Activated CD8-positive, alpha-beta memory T cell treated with anti-CD3 and anti-CD28 coated beads, Interleukin-2, amount 10 ng/mL, durations not matched to agents 7 days and 5 days (primary cell): ENCODE measurements at regions of chr6 and their contacts with region 1.

Region 1: DNA sequence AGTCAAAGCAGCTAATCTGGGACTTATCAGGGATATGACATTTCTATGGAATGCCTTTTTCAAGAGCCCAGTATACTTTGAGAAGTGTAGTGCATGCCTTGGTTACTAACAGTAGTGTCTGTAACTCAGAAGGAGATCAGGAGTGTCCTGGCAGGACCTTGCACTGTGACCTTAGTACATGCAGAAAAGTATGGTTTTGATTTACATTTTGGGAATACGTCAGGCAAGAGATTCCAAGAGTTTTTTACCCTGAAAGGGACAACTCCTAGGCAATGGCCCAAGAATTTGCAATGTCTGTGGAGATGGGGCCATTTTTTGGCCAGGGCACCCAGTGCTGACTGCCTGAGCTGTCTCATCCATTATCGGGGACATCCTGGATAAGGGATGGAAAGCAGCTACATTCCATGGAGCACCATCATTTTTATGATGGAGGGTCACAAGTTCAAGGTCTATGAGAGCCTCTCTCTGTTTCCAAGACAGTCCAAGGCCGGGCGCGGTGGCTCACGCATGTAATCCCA is 80.2 kb downstream of the FAM50B start:
- DNase-seq: no peak
- ATAC-seq: no peak
- H3K4me3 Mint-ChIP-seq: no peak overlapping the region
- H3K27ac Mint-ChIP-seq: no peak overlapping the region
- H3K4me1 Mint-ChIP-seq: no peaks in the 10 kb centered on the region
- H3K27me3 Mint-ChIP-seq: peaks cover 3% of the 10 kb centered on the region

Region 2: DNA sequence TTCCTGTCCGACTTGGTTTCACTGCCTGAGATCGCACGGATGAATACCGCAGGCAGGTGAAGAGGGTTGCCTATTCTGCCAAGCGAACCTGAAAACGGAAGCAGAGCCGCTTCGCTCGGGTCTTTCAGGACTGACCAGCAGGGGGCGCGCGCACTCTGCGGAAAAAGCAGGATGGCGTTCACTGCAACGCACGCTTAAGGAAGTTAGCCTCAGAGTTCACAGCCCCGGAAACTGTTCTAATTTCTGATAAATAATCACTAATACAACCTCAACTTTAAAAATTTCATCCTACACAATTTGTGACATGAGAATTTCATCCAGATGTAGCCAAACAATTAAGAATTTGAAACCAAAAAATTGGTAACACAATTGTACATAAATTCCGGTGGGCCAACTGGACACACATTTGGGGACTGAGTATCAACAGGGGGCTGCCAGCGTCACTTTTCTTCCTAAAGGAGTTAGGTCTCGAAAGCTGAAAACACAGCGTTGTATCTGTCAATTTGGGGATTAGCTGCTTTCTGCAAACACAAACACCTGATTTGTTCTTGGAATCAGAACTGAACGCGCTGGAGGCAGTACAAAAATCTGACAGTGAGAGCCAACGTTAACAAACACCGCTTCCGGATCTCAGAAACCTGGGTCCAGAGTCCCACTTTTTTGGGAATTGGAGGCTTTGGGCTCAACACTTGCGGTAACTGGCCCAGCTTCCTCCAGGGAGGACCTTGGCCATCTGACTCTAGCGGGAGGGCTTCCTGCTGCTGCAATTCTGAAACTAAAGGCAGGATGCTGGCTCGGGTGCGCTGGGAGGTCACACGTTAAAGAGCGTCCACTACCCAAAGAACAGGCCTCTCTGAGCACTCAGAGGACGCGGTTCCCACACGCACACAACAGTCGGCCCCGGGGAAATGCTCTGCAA is 186.7 kb before region 1 on chr6:
- CTCF ChIA-PET with region 1: interaction called, 14 read pairs
- DNase-seq: peak; percentile 88
- ATAC-seq: peak; percentile 87
- H3K4me3 Mint-ChIP-seq: no peak overlapping the region
- H3K27ac Mint-ChIP-seq: no peak overlapping the region
- H3K4me1 Mint-ChIP-seq: peaks cover 14% of the 10 kb centered on the region
- H3K27me3 Mint-ChIP-seq: peaks cover 25% of the 10 kb centered on the region

Region 3: GRCh38 chr6:3748208-3749066 is 180.9 kb before region 1 on chr6:
- CTCF ChIA-PET with region 1: interaction called, 14 read pairs
- DNase-seq: peak; percentile 50
- ATAC-seq: peak; percentile 17
- H3K4me3 Mint-ChIP-seq: no peak overlapping the region
- H3K27ac Mint-ChIP-seq: no peak overlapping the region
- H3K4me1 Mint-ChIP-seq: peaks cover 6% of the 10 kb centered on the region
- H3K27me3 Mint-ChIP-seq: peaks cover 48% of the 10 kb centered on the region

Region 4: GRCh38 chr6:4049246-4049645 is 119.9 kb after region 1 on chr6:
- CTCF ChIA-PET with region 1: no interaction called
- DNase-seq: no peak
- ATAC-seq: no peak
- H3K4me3 Mint-ChIP-seq: no peak overlapping the region
- H3K27ac Mint-ChIP-seq: no peak overlapping the region
- H3K4me1 Mint-ChIP-seq: no peaks in the 10 kb centered on the region
- H3K27me3 Mint-ChIP-seq: no peaks in the 10 kb centered on the region